ENCODE measurements at regions of chr1 and their contacts with region 1.

Region 1: GRCh38 chr1:88983791-88984559 is 8.5 kb downstream of the KYAT3 start:
- DNase-seq: no peak
- H3K4me3 ChIP-seq: no peak overlapping the region
- H3K27ac ChIP-seq: no peak overlapping the region
- H3K4me1 ChIP-seq: peaks cover 0 to 3% (median 0%) of the 10 kb centered on the region in 4 experiments; a peak in 1 of 7 replicates
- H3K27me3 ChIP-seq: no peaks in the 10 kb centered on the region
- CTCF ChIP-seq: peak in 2 of 3 experiments; percentile 39 to 51; a peak in 2 of 4 replicates
- EP300 ChIP-seq: no peak
- POLR2A ChIP-seq: no peak
- RAD21 ChIP-seq: peak; percentile 41 to 57

Region 2: DNA sequence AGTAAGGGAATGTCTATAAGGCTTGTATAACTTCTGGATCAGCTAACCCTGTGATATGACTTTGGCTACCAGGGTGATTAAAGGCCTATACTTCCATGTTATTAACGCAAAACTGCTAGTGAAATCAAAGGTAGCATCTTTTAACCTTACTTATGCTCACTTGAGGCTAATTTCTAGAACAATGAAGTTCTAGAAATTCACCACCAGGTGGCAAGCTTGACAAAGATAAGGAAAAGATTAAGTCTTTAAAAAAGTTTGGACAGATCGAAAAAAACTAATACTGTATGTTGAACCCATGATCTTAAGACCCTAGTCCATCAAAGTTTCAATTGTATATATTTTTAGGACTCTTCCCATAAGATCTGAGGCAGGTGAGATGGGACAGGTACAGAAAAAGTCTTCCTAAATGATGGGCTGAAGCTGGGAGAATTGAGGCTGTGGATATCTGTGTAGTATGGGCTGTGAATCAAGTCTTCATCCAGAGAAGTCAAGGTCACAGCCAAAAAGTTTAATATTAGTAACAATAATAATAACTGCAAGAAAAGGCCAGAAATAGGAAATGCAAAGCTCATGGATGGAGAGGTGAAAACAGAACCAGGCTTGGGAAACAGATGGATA is 10.3 kb before region 1 on chr1:
- CTCF ChIA-PET with region 1: interaction called, 63 read pairs
- POLR2A ChIA-PET with region 1: interaction called, 3 read pairs
- DNase-seq: no peak
- H3K4me3 ChIP-seq: no peak overlapping the region
- H3K27ac ChIP-seq: no peak overlapping the region
- H3K4me1 ChIP-seq: no peaks in the 10 kb centered on the region
- H3K27me3 ChIP-seq: no peaks in the 10 kb centered on the region
- CTCF ChIP-seq: peak in 2 of 3 experiments; percentile 22 to 37; a peak in 2 of 4 replicates
- EP300 ChIP-seq: no peak
- POLR2A ChIP-seq: no peak
- RAD21 ChIP-seq: peak; percentile 50 to 53